ENCODE measurements at regions of chr9 and their contacts with region 1.

Region 1: DNA sequence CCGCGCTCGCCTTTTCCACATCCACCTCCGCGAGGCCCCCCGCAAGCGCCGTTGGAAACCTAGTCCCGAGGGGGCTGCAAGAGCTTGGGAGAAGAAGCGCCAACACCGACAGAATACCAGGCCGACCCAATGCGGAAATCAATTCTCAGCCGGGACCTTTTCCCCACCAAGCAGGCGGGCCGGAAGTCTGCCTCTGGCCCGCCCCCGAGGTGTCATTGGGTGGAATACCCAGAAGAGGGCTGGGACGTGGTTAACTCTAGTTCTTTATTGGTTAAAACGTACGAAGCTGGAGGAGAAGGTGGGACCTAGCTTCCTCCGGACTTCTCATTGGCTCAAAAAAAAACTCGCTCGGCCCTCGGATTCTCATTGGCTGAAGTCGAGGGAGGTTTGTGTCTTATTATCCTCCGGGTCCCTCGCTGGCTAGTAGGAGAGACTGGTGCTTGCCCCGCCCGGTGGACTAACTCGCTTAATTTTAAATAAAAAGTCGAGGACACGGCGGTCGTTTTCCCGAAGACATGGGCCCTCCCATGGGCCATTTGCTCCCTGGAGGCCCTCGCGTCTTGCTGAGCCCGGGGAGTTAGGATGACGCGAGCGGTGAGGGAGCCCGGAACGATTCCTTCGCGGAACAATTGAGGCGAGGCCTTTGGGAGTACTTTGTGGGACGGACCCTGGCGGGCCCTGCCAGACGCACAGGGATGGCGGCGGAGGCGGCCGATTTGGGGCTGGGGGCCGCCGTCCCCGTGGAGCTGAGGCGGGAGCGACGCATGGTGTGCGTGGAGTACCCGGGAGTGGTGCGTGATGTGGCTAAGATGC is at the start of gene GTF3C5:
- DNase-seq: peak; percentile 81 to 97 (median 92)
- ATAC-seq: peak; percentile 96
- H3K4me3 Mint-ChIP-seq: peak within 1 kb of the TSS; percentile 97 to 100 (median 99)
- H3K27ac Mint-ChIP-seq: peak within 1 kb of the TSS; percentile 97 to 99 (median 98)
- H3K4me1 Mint-ChIP-seq: peaks cover 22 to 75% (median 63%) of the 10 kb centered on the region in 4 donors
- H3K27me3 Mint-ChIP-seq: no peaks in the 10 kb centered on the region
- polyA plus RNA-seq, gene GTF3C5: 33.7 to 40.1 (median 37.8) TPM

Region 2: GRCh38 chr9:132908635-132909034 is 121.9 kb before region 1 on chr9:
- POLR2A ChIA-PET with region 1: no interaction called
- DNase-seq: peak in 3 of 10 donors; percentile 19 to 48 (median 31)
- ATAC-seq: peak; percentile 50 to 54
- H3K4me3 Mint-ChIP-seq: peak overlapping the region in 3 of 10 donors; percentile 34 to 52 (median 41)
- H3K27ac Mint-ChIP-seq: peak overlapping the region in 7 of 10 donors; percentile 27 to 79 (median 67)
- H3K4me1 Mint-ChIP-seq: peaks cover 9 to 15% (median 11%) of the 10 kb centered on the region in 4 donors
- H3K27me3 Mint-ChIP-seq: no peaks in the 10 kb centered on the region

Region 3: GRCh38 chr9:132944302-132945185 is 86.0 kb before region 1 on chr9 and contains the start of gene TSC1:
- POLR2A ChIA-PET with region 1: interaction called, 12 read pairs
- DNase-seq: peak; percentile 95 to 100 (median 99)
- ATAC-seq: peak; percentile 86 to 90
- H3K4me3 Mint-ChIP-seq: peak within 1 kb of the TSS; percentile 86 to 99 (median 96)
- H3K27ac Mint-ChIP-seq: peak within 1 kb of the TSS; percentile 98 to 100 (median 98)
- H3K4me1 Mint-ChIP-seq: peaks cover 17 to 30% (median 25%) of the 10 kb centered on the region in 4 donors
- H3K27me3 Mint-ChIP-seq: no peaks in the 10 kb centered on the region
- polyA plus RNA-seq, gene TSC1: 4.8 to 8.7 (median 8.3) TPM